AG04449 (cell line): ENCODE measurements at regions of chr6 and their contacts with region 1.

Region 1: DNA sequence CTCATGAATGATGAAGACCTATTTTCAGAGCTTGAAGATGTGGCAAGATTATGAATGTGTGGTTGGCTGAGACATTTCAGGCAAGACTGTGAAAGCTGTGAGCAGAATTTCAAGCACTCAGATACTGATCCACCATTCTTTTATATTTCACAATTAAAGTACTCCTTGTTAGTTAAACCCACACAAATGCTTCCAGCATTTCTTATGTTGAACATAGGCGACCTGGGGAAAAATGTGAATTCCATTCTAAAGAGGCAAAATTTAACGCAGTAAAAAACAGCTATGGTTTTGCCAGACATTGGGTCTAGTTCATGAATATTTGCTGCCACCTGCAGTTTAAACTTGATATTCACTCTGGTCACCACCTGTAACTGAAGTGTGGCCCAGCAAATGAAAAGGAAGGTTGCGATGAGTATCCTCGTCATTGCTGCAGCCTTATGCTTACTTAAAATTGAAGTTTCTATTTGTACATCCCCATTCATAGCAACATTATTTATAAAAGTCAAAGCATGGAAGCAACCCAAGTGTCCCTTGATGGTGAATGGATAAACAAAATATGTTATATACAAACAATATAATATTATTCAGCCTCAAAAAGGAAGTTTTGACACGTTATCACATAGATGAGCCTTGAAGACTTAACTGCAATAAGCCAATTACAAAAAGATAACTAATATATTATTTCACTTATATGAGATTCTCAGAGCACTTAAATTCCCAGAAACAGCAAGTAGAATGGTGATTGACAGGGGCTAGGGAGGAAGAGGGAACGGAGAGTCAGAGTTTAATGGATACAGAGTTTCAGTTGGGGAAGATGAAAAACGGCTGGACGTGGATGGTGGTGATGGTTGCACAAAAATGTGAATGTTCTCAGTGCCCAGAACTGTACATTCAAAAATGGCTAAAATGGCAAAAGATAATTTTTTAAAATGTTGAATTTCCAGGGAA is 32.4 kb upstream of the FAM184A start:
- DNase-seq: peak; percentile 53
- H3K4me3 ChIP-seq: no peak overlapping the region
- CTCF ChIP-seq: peak; percentile 41

Region 2: DNA sequence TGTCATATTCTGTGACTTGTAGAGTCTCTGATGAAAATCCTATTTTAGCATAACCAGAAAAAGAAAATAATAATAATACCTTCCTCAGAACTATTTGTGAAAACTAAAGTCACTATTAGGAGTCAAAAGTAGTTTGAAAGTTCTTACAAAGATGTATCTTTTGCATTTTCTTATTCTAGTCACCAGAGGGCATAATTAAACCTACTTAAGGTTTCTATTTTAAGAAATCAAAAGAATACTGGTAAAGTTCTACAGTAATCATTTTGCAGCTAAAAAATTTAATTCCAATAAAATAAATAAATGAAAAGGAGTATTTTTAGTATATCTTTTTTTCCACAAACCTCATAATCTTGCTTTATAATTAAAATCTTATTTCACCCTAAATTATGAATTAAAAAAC is 147.9 kb before region 1 on chr6:
- CTCF ChIA-PET with region 1: interaction called, 108 read pairs
- POLR2A ChIA-PET with region 1: no interaction called
- DNase-seq: no peak
- H3K4me3 ChIP-seq: no peak overlapping the region
- CTCF ChIP-seq: no peak

Region 3: DNA sequence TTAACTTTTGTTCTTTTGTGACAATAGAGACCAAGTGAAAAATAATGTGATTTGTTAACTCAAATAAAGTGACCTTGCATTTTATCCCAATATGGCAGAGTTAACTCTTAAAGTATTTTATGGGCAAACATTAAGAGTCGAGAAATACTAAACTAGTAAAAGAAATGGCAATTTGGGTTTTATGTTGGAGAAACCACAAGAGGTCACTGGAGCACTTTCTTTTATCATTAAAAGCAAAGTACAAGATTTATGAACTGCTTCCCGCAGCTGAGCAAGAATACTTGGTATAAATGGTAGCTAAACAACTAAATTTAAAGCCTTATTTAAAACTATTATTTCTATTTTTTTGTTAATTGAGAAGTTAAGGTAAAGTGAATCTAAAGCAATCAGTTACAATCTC is 142.5 kb before region 1 on chr6:
- CTCF ChIA-PET with region 1: interaction called, 108 read pairs
- POLR2A ChIA-PET with region 1: no interaction called
- DNase-seq: no peak
- H3K4me3 ChIP-seq: no peak overlapping the region
- CTCF ChIP-seq: no peak

Region 4: GRCh38 chr6:119099391-119099790 is 11.5 kb before region 1 on chr6:
- CTCF ChIA-PET with region 1: interaction called, 18 read pairs
- POLR2A ChIA-PET with region 1: no interaction called
- DNase-seq: no peak
- H3K4me3 ChIP-seq: no peak overlapping the region
- CTCF ChIP-seq: no peak

Region 5: GRCh38 chr6:119129148-119129967 is 18.5 kb after region 1 on chr6:
- CTCF ChIA-PET with region 1: interaction called, 11 read pairs
- POLR2A ChIA-PET with region 1: no interaction called
- DNase-seq: no peak
- H3K4me3 ChIP-seq: no peak overlapping the region
- CTCF ChIP-seq: peak; percentile 60

Region 6: DNA sequence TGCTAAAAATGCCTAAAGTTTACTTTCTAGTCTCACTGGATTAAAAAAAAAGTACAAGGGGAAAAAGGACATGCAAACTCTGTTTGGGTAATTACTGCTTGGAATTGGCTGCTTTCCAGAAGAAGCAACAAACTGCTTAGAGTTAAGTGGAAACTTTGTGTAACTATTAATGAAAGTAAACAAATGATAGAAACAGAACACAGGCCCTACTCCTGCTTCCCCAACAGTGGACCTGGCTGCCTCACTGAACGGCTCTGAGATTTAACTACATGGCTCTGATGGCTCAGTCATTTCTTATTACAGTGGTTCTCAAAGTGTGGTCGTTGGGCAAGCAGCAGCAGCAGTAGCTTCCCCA is 130.2 kb after region 1 on chr6:
- CTCF ChIA-PET with region 1: no interaction called
- POLR2A ChIA-PET with region 1: no interaction called
- DNase-seq: no peak
- H3K4me3 ChIP-seq: no peak overlapping the region
- CTCF ChIP-seq: no peak